Tibial artery (tissue), 4 donors: ENCODE measurements at regions of chr1 and their contacts with region 1.

Region 1: GRCh38 chr1:100147875-100148274 is 14.9 kb downstream of the TRMT13 start:
- DNase-seq: no peak
- H3K4me3 ChIP-seq: no peak overlapping the region
- H3K27ac ChIP-seq: no peak overlapping the region
- H3K4me1 ChIP-seq: no peaks in the 10 kb centered on the region
- H3K27me3 ChIP-seq: no peaks in the 10 kb centered on the region
- CTCF ChIP-seq: no peak

Region 2: GRCh38 chr1:100107696-100108095 is 40.2 kb before region 1 on chr1:
- intact Hi-C with region 1: no loop called
- DNase-seq: no peak
- H3K4me3 ChIP-seq: no peak overlapping the region
- H3K27ac ChIP-seq: no peak overlapping the region
- H3K4me1 ChIP-seq: no peaks in the 10 kb centered on the region
- H3K27me3 ChIP-seq: no peaks in the 10 kb centered on the region
- CTCF ChIP-seq: no peak

Region 3: GRCh38 chr1:100219883-100220282 is 72.0 kb after region 1 on chr1:
- intact Hi-C with region 1: loop called (anchors 10 kb)
- DNase-seq: no peak
- H3K4me3 ChIP-seq: no peak overlapping the region
- H3K27ac ChIP-seq: no peak overlapping the region
- H3K4me1 ChIP-seq: no peaks in the 10 kb centered on the region
- H3K27me3 ChIP-seq: no peaks in the 10 kb centered on the region
- CTCF ChIP-seq: no peak